Prostate gland (tissue), 2 donors: ENCODE measurements at regions of chr16 and their contacts with region 1.

Region 1: GRCh38 chr16:60203525-60204124 is 1469.5 kb upstream of the GOT2 start:
- DNase-seq: no peak
- H3K4me3 ChIP-seq: no peak overlapping the region
- H3K27ac ChIP-seq: no peak overlapping the region
- H3K4me1 ChIP-seq: no peaks in the 10 kb centered on the region
- H3K27me3 ChIP-seq: no peaks in the 10 kb centered on the region
- CTCF ChIP-seq: peak in 2 of 4 experiments; percentile 32 to 36
- POLR2A ChIP-seq: no peak

Region 2: GRCh38 chr16:59411961-59412841 is 791.4 kb before region 1 on chr16:
- intact Hi-C with region 1: loop called (anchors 10 kb)
- DNase-seq: no peak
- H3K4me3 ChIP-seq: no peak overlapping the region
- H3K27ac ChIP-seq: no peak overlapping the region
- H3K4me1 ChIP-seq: no peaks in the 10 kb centered on the region
- H3K27me3 ChIP-seq: no peaks in the 10 kb centered on the region
- CTCF ChIP-seq: peak in 1 of 4 experiments; percentile 9
- POLR2A ChIP-seq: no peak

Region 3: DNA sequence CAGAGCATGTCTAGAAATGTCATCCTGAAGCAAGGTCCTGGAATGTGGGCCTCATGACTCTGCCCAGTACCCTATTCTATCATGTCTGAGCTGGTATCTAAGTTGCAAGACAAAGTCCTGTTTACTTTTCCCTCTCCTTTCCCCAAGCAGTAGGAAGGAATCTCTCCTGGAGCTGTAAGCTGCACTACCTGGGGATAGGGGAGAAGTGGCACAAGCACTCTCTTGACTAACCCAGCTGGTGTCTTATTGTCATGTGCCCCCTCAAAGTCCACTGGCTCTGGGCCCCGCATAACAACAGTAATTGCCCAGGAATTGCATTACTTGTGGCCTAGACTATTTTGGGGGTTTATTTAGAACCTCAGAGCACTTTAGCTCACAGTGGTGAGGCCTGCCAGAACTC is 103.3 kb before region 1 on chr16:
- intact Hi-C with region 1: no loop called
- DNase-seq: no peak
- H3K4me3 ChIP-seq: no peak overlapping the region
- H3K27ac ChIP-seq: no peak overlapping the region
- H3K4me1 ChIP-seq: no peaks in the 10 kb centered on the region
- H3K27me3 ChIP-seq: peaks cover 2% of the 10 kb centered on the region
- CTCF ChIP-seq: no peak
- POLR2A ChIP-seq: no peak